ENCODE measurements at regions of chr7 and their contacts with region 1.

Region 1: GRCh38 chr7:155769701-155770100 is 42.6 kb downstream of the SHH start:
- DNase-seq: no peak
- ATAC-seq: no peak
- H3K4me3 ChIP-seq: no peak overlapping the region
- H3K27ac ChIP-seq: no peak overlapping the region
- H3K4me1 ChIP-seq: no peaks in the 10 kb centered on the region
- H3K27me3 ChIP-seq: no peaks in the 10 kb centered on the region
- CTCF ChIP-seq: no peak
- POLR2A ChIP-seq: no peak
- RAD21 ChIP-seq: no peak

Region 2: DNA sequence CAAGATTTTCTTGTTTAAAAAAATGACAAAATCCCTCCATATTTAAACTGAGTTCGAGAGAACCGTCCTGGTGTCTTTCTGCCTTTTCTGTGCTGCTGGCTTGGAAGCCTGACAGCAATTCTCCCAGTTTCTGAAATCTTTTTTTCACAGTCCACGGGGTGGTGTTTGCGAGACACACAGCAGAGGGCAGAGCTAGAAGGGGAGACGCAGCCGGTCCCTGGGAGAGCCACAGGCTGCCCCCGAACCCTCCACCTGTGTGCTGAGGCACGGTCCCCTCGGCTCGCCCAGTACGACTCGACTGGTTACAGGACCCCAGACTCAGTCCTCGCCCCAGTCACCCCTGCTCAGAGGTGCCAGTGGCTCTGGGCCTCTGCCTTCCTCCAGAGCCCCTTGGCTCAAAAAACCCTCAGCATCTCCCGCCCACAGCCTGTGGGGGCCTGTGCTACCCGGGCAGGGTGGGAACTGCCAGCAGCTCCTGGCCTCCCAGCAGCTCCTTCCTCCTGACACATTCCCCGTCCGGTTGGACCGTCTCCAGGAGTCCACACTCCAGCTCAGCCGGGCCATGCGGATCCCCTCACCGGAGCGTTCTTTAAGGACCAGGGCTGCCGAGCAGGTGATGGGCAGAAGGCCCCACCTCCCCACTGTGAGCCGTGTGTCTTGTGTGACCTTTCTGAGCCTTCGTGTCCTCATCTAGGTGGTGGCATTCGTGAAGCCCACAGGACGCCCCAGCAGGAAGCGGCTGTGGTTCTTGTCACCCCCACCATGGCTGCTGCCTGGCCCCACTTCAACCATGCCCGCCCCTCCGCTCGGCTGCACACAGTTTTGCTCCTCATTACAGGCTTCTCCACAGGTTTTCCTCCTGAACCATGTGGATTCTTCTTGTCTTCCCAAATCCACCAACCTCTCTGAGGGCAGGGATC is 364.0 kb before region 1 on chr7:
- CTCF ChIA-PET with region 1: no interaction called
- POLR2A ChIA-PET with region 1: no interaction called
- RAD21 ChIA-PET with region 1: no interaction called
- intact Hi-C with region 1: loop called (anchors 2 kb)
- DNase-seq: no peak
- ATAC-seq: peak; percentile 81
- H3K4me3 ChIP-seq: no peak overlapping the region
- H3K27ac ChIP-seq: no peak overlapping the region
- H3K4me1 ChIP-seq: no peaks in the 10 kb centered on the region
- H3K27me3 ChIP-seq: no peaks in the 10 kb centered on the region
- CTCF ChIP-seq: peak; percentile 22 to 32 (median 28); a peak in 3 of 6 replicates
- POLR2A ChIP-seq: no peak
- RAD21 ChIP-seq: peak; percentile 45

Region 3: GRCh38 chr7:155576900-155577508 is 192.7 kb before region 1 on chr7:
- CTCF ChIA-PET with region 1: no interaction called
- POLR2A ChIA-PET with region 1: no interaction called
- RAD21 ChIA-PET with region 1: no interaction called
- intact Hi-C with region 1: no loop called
- DNase-seq: peak; percentile 13
- ATAC-seq: peak; percentile 84
- H3K4me3 ChIP-seq: no peak overlapping the region
- H3K27ac ChIP-seq: no peak overlapping the region
- H3K4me1 ChIP-seq: peaks cover 5 to 12% of the 10 kb centered on the region in 2 experiments; a peak in 2 of 4 replicates
- H3K27me3 ChIP-seq: no peaks in the 10 kb centered on the region
- CTCF ChIP-seq: no peak
- POLR2A ChIP-seq: no peak
- RAD21 ChIP-seq: no peak